Aorta (tissue), 5 donors: ENCODE measurements at regions of chrX and their contacts with region 1.

Region 1: GRCh38 chrX:154534862-154535670 is 11.6 kb downstream of the G6PD start:
- DNase-seq: peak; percentile 93 to 97
- ATAC-seq: peak; percentile 94
- H3K4me3 ChIP-seq: no peak overlapping the region
- H3K27ac ChIP-seq: no peak overlapping the region
- H3K4me1 ChIP-seq: no peaks in the 10 kb centered on the region
- H3K27me3 ChIP-seq: no peaks in the 10 kb centered on the region

Region 2: DNA sequence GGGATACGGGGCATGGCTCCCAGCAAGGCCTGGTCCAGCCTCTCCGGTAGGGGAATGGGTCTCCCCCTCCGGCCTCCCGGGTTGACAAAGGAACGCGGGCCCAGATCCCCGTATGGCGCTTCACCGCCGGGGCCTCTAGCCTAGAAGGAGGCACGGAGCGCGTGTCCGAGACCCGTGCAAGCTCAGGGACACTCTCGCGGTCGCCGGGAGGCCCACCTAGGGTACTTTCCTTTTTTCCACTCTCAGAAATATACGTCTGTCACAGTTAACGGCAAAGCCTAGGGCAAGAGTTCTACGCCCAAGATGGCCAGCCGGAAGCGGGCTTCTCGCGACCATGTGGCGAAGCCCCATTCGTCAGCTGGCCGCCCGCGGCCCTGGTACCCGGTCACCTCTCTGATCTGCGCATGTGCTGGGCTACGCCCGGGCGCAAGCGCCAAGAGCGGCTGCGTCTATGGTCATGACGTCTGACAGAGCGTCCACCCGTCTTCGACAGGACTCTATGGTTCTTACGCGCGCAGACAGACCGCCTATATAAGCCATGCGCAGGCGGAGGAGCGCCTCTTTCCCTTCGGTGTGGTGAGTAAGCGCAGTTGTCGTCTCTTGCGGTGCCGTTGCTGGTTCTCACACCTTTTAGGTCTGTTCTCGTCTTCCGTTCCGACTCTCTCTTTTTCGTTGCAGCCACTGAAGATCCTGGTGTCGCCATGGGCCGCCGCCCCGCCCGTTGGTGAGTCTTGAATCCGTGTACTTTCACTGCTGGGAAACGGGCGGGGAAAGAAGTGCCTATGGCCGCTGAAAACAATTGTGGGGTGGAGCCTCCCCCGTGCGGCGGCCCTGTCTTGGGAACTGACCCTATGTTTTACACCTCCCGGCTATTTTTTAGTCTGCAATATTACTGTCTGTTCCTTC is 137.0 kb before region 1 on chrX and contains the start of gene RPL10:
- intact Hi-C with region 1: loop called (anchors 5 to 10 kb)
- DNase-seq: peak; percentile 96 to 97
- ATAC-seq: peak; percentile 95
- H3K4me3 ChIP-seq: peak within 1 kb of the TSS; percentile 48 to 98
- H3K27ac ChIP-seq: peak within 1 kb of the TSS; percentile 39 to 99
- H3K4me1 ChIP-seq: no peaks in the 10 kb centered on the region
- H3K27me3 ChIP-seq: no peaks in the 10 kb centered on the region
- total RNA-seq, gene RPL10: 2,525 to 2,861 TPM

Region 3: GRCh38 chrX:154409222-154409871 is 125.7 kb before region 1 on chrX and contains the start of gene DNASE1L1:
- intact Hi-C with region 1: loop called in 1 of 2 experiments (anchors 10 kb)
- DNase-seq: peak; percentile 95 to 97
- ATAC-seq: peak; percentile 88
- H3K4me3 ChIP-seq: peak within 1 kb of the TSS in 1 of 2 donors; percentile 1
- H3K27ac ChIP-seq: peak within 1 kb of the TSS in 1 of 2 donors; percentile 94
- H3K4me1 ChIP-seq: no peaks in the 10 kb centered on the region
- H3K27me3 ChIP-seq: no peaks in the 10 kb centered on the region
- total RNA-seq, gene DNASE1L1: 25.9 to 29.0 TPM

Region 4: DNA sequence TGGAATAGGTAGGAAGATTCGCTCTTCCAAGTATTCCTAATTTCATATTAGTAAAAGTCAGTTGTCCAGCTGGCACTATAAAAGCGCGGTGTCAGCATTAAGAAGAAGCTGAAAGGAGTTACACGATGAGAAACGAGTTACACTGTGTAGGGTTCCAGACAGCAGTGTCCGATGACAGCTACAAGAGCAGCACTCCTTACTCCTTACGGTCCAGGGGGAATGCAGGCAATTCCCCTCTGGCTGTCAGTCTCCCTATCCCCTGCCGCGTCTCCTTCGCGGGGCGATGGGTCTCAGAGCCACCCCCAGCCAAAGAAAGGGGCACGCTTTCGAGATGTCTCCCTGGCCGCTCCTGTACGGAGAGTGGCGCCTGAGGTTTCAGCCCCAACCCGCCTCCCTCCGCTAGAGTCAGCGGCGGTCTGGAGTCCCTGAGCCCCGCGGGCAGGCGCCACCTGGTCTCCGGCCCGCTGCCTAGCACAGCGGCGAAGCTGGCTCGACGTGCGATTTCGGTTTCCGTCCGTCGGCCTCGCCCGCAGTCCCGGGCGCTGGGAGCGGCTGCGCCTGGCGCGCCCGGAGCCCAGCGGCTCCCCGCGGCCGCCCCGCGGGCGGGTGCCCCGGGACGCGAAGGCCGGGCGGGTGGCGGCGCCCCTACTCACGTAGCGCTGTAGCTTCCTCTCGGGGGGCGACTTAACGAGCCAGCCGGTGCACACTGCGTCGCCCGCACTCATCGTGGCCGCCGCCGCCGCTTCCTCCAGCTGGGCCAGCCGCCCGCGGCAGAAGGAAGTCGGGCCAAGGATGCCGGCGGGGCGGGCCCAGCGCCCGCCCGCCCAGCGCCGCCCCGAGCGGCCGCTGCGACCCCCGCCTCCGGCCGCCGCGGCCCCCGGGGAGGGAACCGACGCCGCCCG is 215.5 kb after region 1 on chrX and contains the start of gene GAB3:
- intact Hi-C with region 1: no loop called
- DNase-seq: peak; percentile 58 to 81
- ATAC-seq: peak; percentile 65
- H3K4me3 ChIP-seq: peak within 1 kb of the TSS; percentile 44 to 94
- H3K27ac ChIP-seq: peak within 1 kb of the TSS in 1 of 2 donors; percentile 80
- H3K4me1 ChIP-seq: no peaks in the 10 kb centered on the region
- H3K27me3 ChIP-seq: no peaks in the 10 kb centered on the region
- total RNA-seq, gene GAB3: 5.2 to 12.8 TPM